ENCODE measurements at regions of chr11 and their contacts with region 1.

Region 1: DNA sequence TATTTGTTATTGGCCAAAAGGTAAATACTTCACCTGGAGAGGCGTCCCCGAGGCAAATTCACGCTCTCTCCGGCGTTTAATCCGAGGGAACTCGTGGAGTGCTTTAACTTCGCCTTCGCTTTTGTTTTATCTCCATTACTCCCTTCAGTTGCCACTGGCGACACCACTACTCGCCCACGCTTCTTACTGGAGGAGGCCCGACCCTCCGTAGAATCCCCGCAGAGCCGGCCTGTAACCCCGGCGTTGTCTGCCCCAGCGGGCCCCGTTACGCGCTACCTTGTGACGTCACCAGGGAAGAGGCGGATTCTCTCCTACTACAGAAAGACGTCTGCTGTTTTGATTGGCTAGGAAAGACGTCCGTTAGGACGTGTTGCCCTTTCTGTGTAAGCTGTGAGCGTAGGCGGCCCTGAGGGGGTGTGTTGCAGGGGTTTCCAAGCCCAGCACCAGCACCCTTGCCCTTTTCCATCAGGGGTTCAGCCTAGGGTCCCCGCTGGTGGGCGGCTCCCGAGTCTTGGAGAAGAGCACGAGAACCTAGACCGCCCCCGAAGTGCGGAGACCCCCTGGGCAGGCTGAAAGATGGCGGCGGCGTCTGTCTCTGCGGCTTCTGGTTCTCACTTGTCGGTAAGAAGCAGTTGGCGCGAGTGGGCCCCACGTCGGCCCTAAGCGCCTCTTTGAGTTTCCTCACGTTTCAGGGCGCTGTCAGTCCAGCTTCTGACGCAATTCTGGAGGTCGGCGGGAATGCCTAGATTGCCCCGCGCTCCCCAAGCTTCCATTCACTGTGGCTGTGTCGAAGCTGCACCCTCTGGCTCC is at the start of gene CEP57:
- DNase-seq: peak; percentile 80 to 98 (median 96)
- ATAC-seq: peak; percentile 70
- H3K4me3 ChIP-seq: peak within 1 kb of the TSS; percentile 97
- H3K4me3 Mint-ChIP-seq: peak within 1 kb of the TSS; percentile 93 to 100 (median 100)
- H3K27ac ChIP-seq: peak within 1 kb of the TSS; percentile 99
- H3K27ac Mint-ChIP-seq: peak within 1 kb of the TSS; percentile 100
- H3K4me1 ChIP-seq: peaks cover 21 to 22% of the 10 kb centered on the region in 2 donors
- H3K4me1 Mint-ChIP-seq: peaks cover 47 to 74% (median 61%) of the 10 kb centered on the region in 7 donors
- H3K27me3 ChIP-seq: no peaks in the 10 kb centered on the region
- H3K27me3 Mint-ChIP-seq: no peaks in the 10 kb centered on the region
- total RNA-seq, gene CEP57: 47.8 to 72.3 (median 68.9) TPM

Region 2: DNA sequence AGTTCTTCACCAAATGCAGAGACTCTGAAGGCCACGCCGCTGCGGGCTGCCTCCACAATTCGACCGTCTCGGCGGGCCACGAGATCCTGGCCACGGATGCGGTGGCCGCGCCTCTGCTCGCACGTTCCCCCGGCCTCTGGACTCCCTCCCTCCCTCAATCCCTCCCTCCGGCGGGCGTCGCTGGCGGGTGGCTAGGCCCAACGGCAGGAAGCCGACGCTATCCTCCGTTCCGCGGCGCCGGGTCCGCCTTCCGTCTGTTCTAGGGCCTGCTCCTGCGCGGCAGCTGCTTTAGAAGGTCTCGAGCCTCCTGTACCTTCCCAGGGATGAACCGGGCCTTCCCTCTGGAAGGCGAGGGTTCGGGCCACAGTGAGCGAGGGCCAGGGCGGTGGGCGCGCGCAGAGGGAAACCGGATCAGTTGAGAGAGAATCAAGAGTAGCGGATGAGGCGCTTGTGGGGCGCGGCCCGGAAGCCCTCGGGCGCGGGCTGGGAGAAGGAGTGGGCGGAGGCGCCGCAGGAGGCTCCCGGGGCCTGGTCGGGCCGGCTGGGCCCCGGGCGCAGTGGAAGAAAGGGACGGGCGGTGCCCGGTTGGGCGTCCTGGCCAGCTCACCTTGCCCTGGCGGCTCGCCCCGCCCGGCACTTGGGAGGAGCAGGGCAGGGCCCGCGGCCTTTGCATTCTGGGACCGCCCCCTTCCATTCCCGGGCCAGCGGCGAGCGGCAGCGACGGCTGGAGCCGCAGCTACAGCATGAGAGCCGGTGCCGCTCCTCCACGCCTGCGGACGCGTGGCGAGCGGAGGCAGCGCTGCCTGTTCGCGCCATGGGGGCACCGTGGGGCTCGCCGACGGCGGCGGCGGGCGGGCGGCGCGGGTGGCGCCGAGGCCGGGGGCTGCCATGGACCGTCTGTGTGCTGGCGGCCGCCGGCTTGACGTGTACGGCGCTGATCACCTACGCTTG is 1246.4 kb before region 1 on chr11 and contains the start of gene FUT4:
- CTCF ChIA-PET with region 1: no interaction called
- POLR2A ChIA-PET with region 1: no interaction called
- intact Hi-C with region 1: loop called (anchors 1 to 2 kb)
- DNase-seq: peak; percentile 51 to 83 (median 70)
- ATAC-seq: peak; percentile 84
- H3K4me3 ChIP-seq: peak within 1 kb of the TSS; percentile 85
- H3K4me3 Mint-ChIP-seq: peak within 1 kb of the TSS; percentile 93 to 100 (median 98)
- H3K27ac ChIP-seq: peak within 1 kb of the TSS; percentile 88
- H3K27ac Mint-ChIP-seq: peak within 1 kb of the TSS; percentile 96 to 100 (median 99)
- H3K4me1 ChIP-seq: peaks cover 22 to 29% of the 10 kb centered on the region in 2 donors
- H3K4me1 Mint-ChIP-seq: peaks cover 24 to 49% (median 41%) of the 10 kb centered on the region in 7 donors
- H3K27me3 ChIP-seq: no peaks in the 10 kb centered on the region
- H3K27me3 Mint-ChIP-seq: no peaks in the 10 kb centered on the region
- total RNA-seq, gene FUT4: 5.6 to 10.2 (median 6.9) TPM

Region 3: DNA sequence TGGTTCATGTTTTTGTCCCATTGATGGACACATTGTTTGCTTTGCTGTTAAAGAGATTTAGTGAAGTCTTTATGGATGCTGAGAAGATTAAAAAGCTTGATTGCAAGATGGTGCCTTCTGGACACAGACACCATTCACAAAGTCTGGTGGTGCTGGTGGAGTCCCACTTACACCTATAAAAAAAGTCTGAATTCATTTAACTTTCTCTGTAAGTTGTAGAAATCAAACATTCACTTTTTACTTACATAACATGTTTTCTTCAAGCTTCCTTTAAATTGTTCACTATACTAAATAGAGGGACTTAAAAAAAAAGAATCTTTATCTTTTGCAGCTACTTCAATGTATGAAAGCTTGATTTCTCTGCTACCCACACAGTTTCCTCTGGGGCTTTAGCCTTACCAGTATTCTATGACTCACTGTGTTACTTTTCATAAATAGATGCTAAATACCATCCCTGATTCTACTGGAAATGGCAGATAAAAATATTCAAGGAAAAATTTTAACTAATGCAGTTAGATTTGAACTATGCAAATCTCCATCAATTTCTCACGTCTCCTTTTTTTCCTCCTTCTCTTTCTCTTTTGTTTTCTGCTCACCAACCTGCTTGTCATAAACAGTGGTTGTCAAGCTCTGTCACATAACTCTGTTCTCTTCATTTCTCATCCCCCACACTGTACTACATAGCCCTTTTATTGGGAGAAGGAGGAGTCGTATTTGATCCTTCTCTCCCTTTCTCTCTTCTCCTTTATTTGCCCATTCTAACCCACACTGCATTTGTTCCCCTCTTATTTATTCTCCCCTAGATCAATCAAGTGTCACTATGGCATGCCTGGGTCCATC is 90.5 kb before region 1 on chr11:
- CTCF ChIA-PET with region 1: no interaction called
- POLR2A ChIA-PET with region 1: interaction called, 5 read pairs
- intact Hi-C with region 1: loop called in 1 of 2 experiments (anchors 1 kb)
- DNase-seq: peak in 7 of 9 donors; percentile 41 to 67 (median 49)
- ATAC-seq: peak; percentile 78
- H3K4me3 ChIP-seq: peak overlapping the region; percentile 36
- H3K4me3 Mint-ChIP-seq: peak overlapping the region; percentile 68 to 87 (median 76)
- H3K27ac ChIP-seq: peak overlapping the region; percentile 85
- H3K27ac Mint-ChIP-seq: peak overlapping the region in 8 of 9 donors; percentile 95 to 99 (median 96)
- H3K4me1 ChIP-seq: peaks cover 42 to 72% of the 10 kb centered on the region in 2 donors
- H3K4me1 Mint-ChIP-seq: peaks cover 32 to 65% (median 61%) of the 10 kb centered on the region in 7 donors
- H3K27me3 ChIP-seq: no peaks in the 10 kb centered on the region
- H3K27me3 Mint-ChIP-seq: no peaks in the 10 kb centered on the region

Region 4: GRCh38 chr11:96012086-96012824 is 221.9 kb after region 1 on chr11:
- CTCF ChIA-PET with region 1: no interaction called
- POLR2A ChIA-PET with region 1: no interaction called
- intact Hi-C with region 1: loop called (anchors 1 to 5 kb)
- DNase-seq: peak in 8 of 9 donors; percentile 23 to 89 (median 80)
- ATAC-seq: peak; percentile 83
- H3K4me3 ChIP-seq: no peak overlapping the region
- H3K4me3 Mint-ChIP-seq: peak overlapping the region; percentile 58 to 87 (median 71)
- H3K27ac ChIP-seq: peak overlapping the region; percentile 58
- H3K27ac Mint-ChIP-seq: peak overlapping the region in 6 of 9 donors; percentile 76 to 98 (median 96)
- H3K4me1 ChIP-seq: peaks cover 39 to 52% of the 10 kb centered on the region in 2 donors
- H3K4me1 Mint-ChIP-seq: peaks cover 12 to 50% (median 28%) of the 10 kb centered on the region in 7 donors
- H3K27me3 ChIP-seq: no peaks in the 10 kb centered on the region
- H3K27me3 Mint-ChIP-seq: no peaks in the 10 kb centered on the region

Region 5: DNA sequence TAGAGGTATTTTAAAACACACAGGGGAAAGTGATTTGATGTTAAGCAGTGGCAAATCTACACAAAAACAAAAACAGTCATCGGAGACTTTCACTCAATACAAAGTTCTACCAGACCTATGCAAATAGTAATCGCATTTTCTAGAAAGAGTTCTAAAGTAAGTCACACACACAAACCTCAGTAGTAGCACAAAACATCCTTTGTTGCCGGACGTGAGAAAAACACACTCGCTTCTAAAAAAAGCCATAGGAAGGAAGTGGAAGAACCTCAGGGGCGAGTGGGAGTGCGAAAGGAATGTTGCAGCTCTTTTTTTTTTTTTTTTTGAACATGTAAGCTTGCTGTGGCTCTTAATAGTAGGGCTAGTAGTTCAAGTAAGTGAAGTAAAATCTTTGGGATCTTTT is 463.8 kb after region 1 on chr11:
- CTCF ChIA-PET with region 1: no interaction called
- POLR2A ChIA-PET with region 1: no interaction called
- intact Hi-C with region 1: loop called in 1 of 2 experiments (anchors 5 kb)
- DNase-seq: peak in 7 of 9 donors; percentile 32 to 64 (median 43)
- ATAC-seq: peak; percentile 32
- H3K4me3 ChIP-seq: peak overlapping the region; percentile 40
- H3K4me3 Mint-ChIP-seq: peak overlapping the region; percentile 74 to 87 (median 81)
- H3K27ac ChIP-seq: peak overlapping the region; percentile 77
- H3K27ac Mint-ChIP-seq: peak overlapping the region; percentile 87 to 100 (median 96)
- H3K4me1 ChIP-seq: peaks cover 58 to 78% of the 10 kb centered on the region in 2 donors
- H3K4me1 Mint-ChIP-seq: peaks cover 62 to 99% (median 94%) of the 10 kb centered on the region in 7 donors
- H3K27me3 ChIP-seq: no peaks in the 10 kb centered on the region
- H3K27me3 Mint-ChIP-seq: no peaks in the 10 kb centered on the region

Measured in naive thymus-derived CD4-positive, alpha-beta T cell (primary cell).